SK-N-SH (cell line): ENCODE measurements at regions of chr15 and their contacts with region 1.

Region 1: DNA sequence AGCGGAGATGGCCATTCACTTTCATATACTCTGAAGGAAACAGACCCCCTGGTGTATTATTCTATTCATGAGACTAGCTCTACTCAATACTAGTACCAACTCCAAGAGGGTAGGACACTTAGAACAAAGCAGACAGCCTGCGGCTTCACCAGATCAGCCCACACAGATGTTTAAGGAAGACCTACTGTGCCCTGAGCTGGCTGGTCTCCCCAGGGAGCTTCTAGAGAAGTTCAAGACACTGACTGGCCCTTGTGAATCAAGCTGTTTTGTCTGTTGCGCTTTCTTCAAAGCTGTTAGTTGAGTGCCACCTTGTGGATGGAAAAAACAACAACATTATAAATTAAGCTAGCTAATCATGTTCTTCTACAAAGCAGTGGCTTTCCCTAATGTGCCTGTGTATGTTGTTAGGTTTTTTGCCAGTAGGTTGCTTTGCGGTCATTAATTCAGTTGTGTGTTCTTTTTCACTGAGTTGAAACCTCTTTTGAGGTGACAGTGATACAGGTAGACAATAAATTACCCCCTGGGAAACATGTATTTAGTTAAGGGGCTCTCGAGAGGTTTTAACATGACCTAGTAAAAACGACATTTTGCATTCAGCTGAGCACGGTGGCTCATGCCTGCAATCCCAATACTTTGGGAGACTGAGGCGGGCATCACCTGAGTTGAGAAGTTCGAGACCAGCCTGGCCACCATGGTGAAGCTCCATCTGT is 64.2 kb upstream of the MYZAP start:
- DNase-seq: peak; percentile 51
- H3K4me3 ChIP-seq: no peak overlapping the region
- H3K27ac ChIP-seq: no peak overlapping the region
- H3K4me1 ChIP-seq: peaks cover 0 to 10% of the 10 kb centered on the region in 2 experiments; a peak in 1 of 4 replicates
- H3K27me3 ChIP-seq: no peaks in the 10 kb centered on the region
- CTCF ChIP-seq: peak; percentile 71
- EP300 ChIP-seq: no peak
- RAD21 ChIP-seq: peak; percentile 95

Region 2: GRCh38 chr15:56739964-56740640 is 787.4 kb before region 1 on chr15:
- CTCF ChIA-PET with region 1: no interaction called
- POLR2A ChIA-PET with region 1: no interaction called
- DNase-seq: no peak
- H3K4me3 ChIP-seq: no peak overlapping the region
- H3K27ac ChIP-seq: no peak overlapping the region
- H3K4me1 ChIP-seq: no peaks in the 10 kb centered on the region
- H3K27me3 ChIP-seq: no peaks in the 10 kb centered on the region
- CTCF ChIP-seq: no peak; the same call in 1 of the 2 replicates
- EP300 ChIP-seq: no peak
- RAD21 ChIP-seq: no peak

Region 3: GRCh38 chr15:57323806-57324589 is 203.5 kb before region 1 on chr15:
- CTCF ChIA-PET with region 1: interaction called, 23 read pairs
- POLR2A ChIA-PET with region 1: no interaction called
- DNase-seq: peak; percentile 62
- H3K4me3 ChIP-seq: no peak overlapping the region
- H3K27ac ChIP-seq: peak overlapping the region; percentile 53 to 73; a peak in 3 of 4 replicates
- H3K4me1 ChIP-seq: peaks cover 8 to 41% of the 10 kb centered on the region in 2 experiments; a peak in 2 of 4 replicates
- H3K27me3 ChIP-seq: no peaks in the 10 kb centered on the region
- CTCF ChIP-seq: no peak
- EP300 ChIP-seq: no peak
- RAD21 ChIP-seq: no peak

Region 4: DNA sequence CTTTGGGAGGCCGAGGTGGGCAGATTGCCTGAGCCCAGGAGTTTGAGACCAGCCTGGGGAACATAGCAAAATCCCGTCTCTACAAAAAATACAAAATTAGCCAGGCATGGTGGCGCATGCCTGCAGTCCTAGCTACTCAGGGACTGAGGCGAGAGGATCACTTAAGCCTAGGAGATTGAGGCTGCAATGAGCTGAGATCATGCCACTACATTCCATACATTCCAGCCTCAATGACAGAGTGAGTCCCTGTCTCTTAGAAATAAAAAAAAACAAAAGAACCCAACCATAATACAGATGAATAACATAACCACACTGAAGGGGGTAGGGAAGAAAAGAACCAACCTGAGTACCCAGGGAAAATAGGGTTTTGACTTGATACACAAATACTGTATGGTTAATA is 170.9 kb before region 1 on chr15:
- CTCF ChIA-PET with region 1: interaction called, 25 read pairs
- POLR2A ChIA-PET with region 1: no interaction called
- DNase-seq: no peak
- H3K4me3 ChIP-seq: no peak overlapping the region
- H3K27ac ChIP-seq: no peak overlapping the region
- H3K4me1 ChIP-seq: peaks cover 0 to 2% of the 10 kb centered on the region in 2 experiments; a peak in 2 of 4 replicates
- H3K27me3 ChIP-seq: no peaks in the 10 kb centered on the region
- CTCF ChIP-seq: no peak
- EP300 ChIP-seq: no peak
- RAD21 ChIP-seq: no peak

Region 5: DNA sequence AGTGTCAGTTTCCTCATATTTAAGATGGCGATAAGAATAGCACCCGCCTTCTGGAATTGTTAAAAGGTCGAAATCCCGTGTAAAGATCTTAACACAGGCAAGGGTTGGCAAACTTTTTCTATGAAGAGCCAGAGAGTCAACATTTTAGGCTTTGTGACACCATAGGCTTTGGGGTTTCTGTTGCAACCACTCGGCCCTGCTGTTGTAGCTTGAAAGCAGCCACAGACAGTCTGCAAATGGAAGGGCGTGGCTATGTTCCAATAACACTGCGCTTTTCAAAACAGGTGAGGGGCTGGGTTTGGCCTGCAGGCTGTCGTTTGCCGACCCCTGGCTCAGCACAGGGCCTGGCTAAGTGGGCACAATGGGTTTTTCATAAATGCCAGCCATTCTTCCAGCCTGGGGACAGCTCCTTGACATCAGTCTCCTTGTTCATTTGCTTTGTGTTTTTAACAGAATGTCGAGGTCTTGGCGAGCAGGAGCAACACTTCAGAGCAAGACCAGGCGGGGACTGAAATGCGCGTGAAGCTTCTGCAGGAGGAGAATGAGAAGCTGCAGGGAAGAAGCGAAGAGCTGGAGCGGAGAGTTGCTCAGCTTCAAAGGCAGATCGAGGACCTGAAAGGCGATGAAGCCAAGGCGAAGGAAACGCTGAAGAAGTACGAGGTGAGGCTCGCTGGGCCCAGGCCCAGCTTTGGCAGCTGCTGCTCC is 11.1 kb before region 1 on chr15:
- CTCF ChIA-PET with region 1: interaction called, 35 read pairs
- POLR2A ChIA-PET with region 1: no interaction called
- DNase-seq: no peak
- H3K4me3 ChIP-seq: no peak overlapping the region
- H3K27ac ChIP-seq: no peak overlapping the region
- H3K4me1 ChIP-seq: peaks cover 0 to 4% of the 10 kb centered on the region in 2 experiments; a peak in 1 of 4 replicates
- H3K27me3 ChIP-seq: no peaks in the 10 kb centered on the region
- CTCF ChIP-seq: no peak
- EP300 ChIP-seq: no peak
- RAD21 ChIP-seq: no peak